ENCODE measurements at regions of chr2 and their contacts with region 1.

Region 1: DNA sequence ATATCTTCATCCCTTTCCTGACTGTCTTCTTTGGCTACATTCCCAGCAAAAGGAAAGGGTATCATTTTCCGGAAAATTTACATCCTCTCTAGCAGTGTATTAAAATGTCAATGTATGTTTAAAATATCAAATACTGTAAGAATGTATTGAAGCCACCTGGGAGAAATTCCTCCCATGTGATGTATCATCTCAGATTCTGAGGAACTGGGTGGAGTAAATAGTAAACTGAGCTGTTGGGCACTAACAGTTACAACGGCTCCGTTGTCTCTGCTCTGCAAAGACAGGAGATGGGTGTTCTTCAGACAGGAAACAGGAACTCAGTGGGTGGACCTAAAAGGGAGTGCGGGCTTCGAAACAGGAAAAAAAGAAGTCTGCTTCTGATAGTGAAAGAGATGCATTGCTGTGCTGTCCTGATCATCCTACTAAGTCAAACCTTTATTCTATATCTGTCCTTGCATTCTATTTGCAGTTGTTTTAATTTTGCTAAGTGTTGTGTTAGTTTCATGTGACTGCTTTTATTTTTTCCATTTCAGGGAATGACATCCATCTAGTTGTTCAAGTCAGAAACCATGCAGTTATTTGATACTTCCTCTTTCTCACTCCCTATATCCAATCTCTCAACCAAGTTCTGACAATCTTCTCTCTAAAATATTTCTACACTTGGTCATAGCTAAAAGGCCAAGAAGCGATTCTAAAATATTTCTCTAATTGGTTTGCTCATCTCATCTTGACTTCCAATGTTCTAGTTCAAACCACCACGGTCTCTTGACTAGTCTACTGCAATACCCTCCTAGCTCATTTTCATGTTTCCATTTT is 19.4 kb downstream of the DOK1 start:
- DNase-seq: no peak
- H3K4me3 ChIP-seq: no peak overlapping the region
- H3K27ac ChIP-seq: no peak overlapping the region
- H3K4me1 ChIP-seq: no peaks in the 10 kb centered on the region
- H3K27me3 ChIP-seq: no peaks in the 10 kb centered on the region
- CTCF ChIP-seq: no peak
- EP300 ChIP-seq: no peak
- POLR2A ChIP-seq: no peak
- RAD21 ChIP-seq: no peak

Region 2: DNA sequence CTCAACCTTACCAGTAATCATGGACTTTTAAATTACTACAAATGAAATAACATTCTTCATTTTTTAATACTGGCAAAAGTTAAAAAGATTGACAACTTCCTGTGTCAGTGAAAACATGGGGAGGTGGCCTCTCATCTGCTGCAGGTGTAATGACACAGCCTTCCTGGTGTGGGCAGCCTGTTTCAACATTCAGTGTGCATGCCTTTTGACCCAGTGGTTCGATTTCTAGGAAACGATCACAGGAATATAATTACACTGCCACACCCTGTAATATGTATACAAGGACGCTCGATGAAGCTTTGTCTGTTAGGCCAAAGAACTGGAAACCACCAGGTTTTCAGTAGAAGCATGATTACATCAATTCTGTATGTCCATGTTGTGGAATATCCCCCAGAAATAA is 306.9 kb before region 1 on chr2:
- CTCF ChIA-PET with region 1: no interaction called
- POLR2A ChIA-PET with region 1: no interaction called
- DNase-seq: no peak
- H3K4me3 ChIP-seq: no peak overlapping the region
- H3K27ac ChIP-seq: no peak overlapping the region
- H3K4me1 ChIP-seq: no peaks in the 10 kb centered on the region
- H3K27me3 ChIP-seq: no peaks in the 10 kb centered on the region
- CTCF ChIP-seq: peak; percentile 38 to 62 (median 57); a peak in 3 of 4 replicates
- EP300 ChIP-seq: no peak
- POLR2A ChIP-seq: no peak
- RAD21 ChIP-seq: peak; percentile 59 to 60

Region 3: DNA sequence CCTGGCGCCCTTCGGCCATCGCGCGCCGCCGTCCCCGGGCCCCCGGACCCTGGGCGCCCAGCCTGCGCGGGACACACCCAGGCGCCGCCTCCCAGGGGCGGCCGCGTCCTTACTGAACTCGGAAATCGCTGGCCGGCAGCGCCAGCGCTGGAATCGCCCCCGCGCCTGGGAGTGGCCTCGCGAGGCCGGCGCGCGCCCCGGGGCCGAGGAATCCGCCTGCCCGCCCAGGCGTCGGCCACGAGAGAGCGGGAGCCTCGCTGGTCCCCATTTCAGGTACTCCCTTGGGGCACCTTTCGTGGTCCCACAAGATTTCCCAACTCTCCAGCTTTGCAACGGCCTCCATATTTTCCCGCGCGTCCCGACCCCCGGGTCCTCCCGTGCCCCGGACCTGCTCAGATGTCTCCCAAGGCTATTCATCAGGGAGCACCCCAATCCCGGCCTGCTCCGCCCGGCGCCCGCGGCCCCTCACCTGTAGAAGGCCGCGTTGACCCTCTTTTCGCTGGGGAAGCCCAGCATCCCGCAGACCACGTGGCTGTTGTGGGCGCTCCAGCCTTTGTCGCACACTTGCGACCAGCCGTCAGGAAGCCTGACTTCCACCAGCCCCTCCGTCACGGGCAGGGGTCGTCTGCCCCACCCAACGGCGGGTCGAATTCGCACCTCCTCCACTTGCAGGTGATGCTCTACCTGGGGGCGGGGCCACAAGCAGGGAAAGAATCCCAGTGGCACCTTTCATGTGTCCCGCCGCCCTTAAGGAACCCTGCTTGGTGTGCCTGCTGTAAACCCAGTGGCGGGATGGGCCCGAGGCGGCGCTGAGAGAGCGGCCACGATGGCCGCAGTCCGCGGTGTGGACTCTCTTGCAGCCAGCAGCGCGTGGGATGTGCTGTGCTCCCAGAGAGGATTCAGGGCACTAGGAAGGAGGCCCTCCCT is 24.8 kb before region 1 on chr2:
- CTCF ChIA-PET with region 1: interaction called, 12 read pairs
- POLR2A ChIA-PET with region 1: interaction called, 4 read pairs
- DNase-seq: peak in 1 of 2 experiments; percentile 87
- H3K4me3 ChIP-seq: peak overlapping the region; percentile 62 to 90 (median 71)
- H3K27ac ChIP-seq: peak overlapping the region; percentile 11; the same call in 1 of the 2 replicates
- H3K4me1 ChIP-seq: peaks cover 5 to 18% (median 7%) of the 10 kb centered on the region in 4 experiments
- H3K27me3 ChIP-seq: peaks cover 4 to 59% (median 28%) of the 10 kb centered on the region in 4 experiments
- CTCF ChIP-seq: no peak; a peak in 1 of 4 replicates
- EP300 ChIP-seq: no peak
- POLR2A ChIP-seq: peak in 1 of 2 experiments; percentile 63; a peak in 2 of 3 replicates
- RAD21 ChIP-seq: no peak; a peak in 1 of 4 replicates

Region 4: DNA sequence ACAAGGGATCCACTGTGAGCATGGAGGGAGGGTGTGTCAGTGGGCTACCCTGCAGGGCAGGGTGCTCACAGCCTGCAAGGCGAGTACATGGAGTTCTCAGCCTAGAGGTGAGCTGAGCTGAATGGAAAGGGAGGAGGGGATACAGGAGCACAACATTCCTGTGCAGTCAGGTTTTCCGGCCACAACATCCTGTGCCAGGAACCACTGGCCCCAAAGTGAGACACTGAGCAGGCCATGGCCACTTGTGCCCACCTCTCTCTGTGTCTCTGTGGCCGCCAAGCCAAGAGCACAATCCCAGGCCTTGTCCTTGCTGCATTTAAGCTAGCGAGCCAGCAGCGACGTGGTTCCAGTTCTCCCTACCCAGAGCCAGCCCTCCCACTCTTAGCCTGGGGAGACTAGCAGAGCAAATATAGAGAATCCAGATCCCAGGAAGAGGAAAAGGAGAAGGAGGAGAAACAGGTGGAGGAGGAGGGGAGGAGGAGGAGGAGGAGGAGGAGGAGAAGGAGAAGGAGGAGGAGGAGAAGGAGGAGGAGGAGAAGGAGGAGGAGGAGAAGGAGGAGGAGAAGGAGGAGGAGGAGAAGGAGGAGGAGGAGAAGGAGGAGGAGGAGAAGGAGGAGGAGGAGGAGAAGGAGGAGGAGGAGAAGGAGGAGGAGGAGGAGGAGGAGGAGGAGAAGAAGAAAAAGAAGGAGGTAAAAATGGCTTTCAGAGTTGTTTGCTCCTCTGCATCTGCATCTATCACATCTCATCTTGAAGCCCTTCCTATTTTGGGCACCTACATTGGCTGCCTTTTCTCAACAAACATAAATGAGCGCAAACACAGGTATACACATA is 13.1 kb before region 1 on chr2:
- CTCF ChIA-PET with region 1: interaction called, 37 read pairs
- POLR2A ChIA-PET with region 1: interaction called, 3 read pairs
- DNase-seq: no peak
- H3K4me3 ChIP-seq: no peak overlapping the region
- H3K27ac ChIP-seq: no peak overlapping the region
- H3K4me1 ChIP-seq: peaks cover 0 to 6% (median 3%) of the 10 kb centered on the region in 4 experiments; a peak in 6 of 7 replicates
- H3K27me3 ChIP-seq: peaks cover 0 to 19% (median 13%) of the 10 kb centered on the region in 4 experiments; a peak in 6 of 7 replicates
- CTCF ChIP-seq: no peak
- EP300 ChIP-seq: no peak
- POLR2A ChIP-seq: no peak
- RAD21 ChIP-seq: no peak

Region 5: DNA sequence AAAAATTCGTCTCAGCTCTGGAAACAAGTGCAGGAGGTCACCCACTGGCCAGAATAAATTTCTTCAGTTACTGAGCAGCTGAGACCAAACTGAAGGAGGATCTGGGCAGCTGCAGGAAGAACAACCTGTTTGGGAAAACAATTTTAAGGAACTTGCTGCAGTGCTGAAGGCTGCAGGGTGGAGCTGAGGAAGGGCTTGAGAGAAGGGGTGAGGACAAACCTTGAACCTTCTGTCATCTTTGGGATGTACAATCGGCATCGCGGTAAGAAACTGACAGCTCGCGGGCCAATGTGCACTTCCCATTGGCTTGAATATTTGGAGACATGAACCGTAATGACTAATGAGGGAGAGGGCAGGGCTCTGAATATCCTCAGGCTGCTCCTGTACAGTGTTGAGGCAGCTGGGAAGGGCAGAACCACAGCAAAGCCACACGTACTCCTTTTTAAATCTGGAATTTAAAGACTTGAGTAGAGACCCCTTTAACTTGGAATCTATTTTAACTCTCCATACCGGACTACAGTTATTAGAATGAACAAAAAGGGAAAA is 535.1 kb after region 1 on chr2:
- CTCF ChIA-PET with region 1: no interaction called
- POLR2A ChIA-PET with region 1: no interaction called
- DNase-seq: no peak
- H3K4me3 ChIP-seq: no peak overlapping the region
- H3K27ac ChIP-seq: no peak overlapping the region
- H3K4me1 ChIP-seq: peaks cover 0 to 4% (median 0%) of the 10 kb centered on the region in 4 experiments; a peak in 1 of 7 replicates
- H3K27me3 ChIP-seq: no peaks in the 10 kb centered on the region
- CTCF ChIP-seq: no peak
- EP300 ChIP-seq: no peak
- POLR2A ChIP-seq: no peak
- RAD21 ChIP-seq: no peak

Measured in H1 (cell line).